ENCODE measurements at regions of chr4 and their contacts with region 1.

Region 1: GRCh38 chr4:122710434-122711308 is 21.8 kb upstream of the BBS12 start:
- DNase-seq: peak; percentile 72
- ATAC-seq: peak; percentile 91
- H3K4me3 Mint-ChIP-seq: peak overlapping the region; percentile 56
- H3K27ac Mint-ChIP-seq: peak overlapping the region; percentile 97
- H3K4me1 Mint-ChIP-seq: peaks cover 79% of the 10 kb centered on the region
- H3K27me3 Mint-ChIP-seq: no peaks in the 10 kb centered on the region

Region 2: GRCh38 chr4:122508083-122508482 is 202.6 kb before region 1 on chr4:
- CTCF ChIA-PET with region 1: no interaction called
- POLR2A ChIA-PET with region 1: interaction called, 3 read pairs
- intact Hi-C with region 1: loop called (anchors 2 to 5 kb)
- DNase-seq: no peak
- ATAC-seq: peak; percentile 77
- H3K4me3 Mint-ChIP-seq: peak overlapping the region; percentile 64
- H3K27ac Mint-ChIP-seq: peak overlapping the region; percentile 92
- H3K4me1 Mint-ChIP-seq: peaks cover 84% of the 10 kb centered on the region
- H3K27me3 Mint-ChIP-seq: peaks cover 2% of the 10 kb centered on the region

Region 3: GRCh38 chr4:122602277-122603142 is 108.2 kb before region 1 on chr4:
- CTCF ChIA-PET with region 1: interaction called, 49 read pairs
- POLR2A ChIA-PET with region 1: no interaction called
- intact Hi-C with region 1: no loop called
- DNase-seq: peak; percentile 40
- ATAC-seq: peak; percentile 89
- H3K4me3 Mint-ChIP-seq: peak overlapping the region; percentile 54
- H3K27ac Mint-ChIP-seq: peak overlapping the region; percentile 59
- H3K4me1 Mint-ChIP-seq: peaks cover 30% of the 10 kb centered on the region
- H3K27me3 Mint-ChIP-seq: peaks cover 3% of the 10 kb centered on the region

Region 4: GRCh38 chr4:122632396-122633143 is 78.1 kb before region 1 on chr4:
- CTCF ChIA-PET with region 1: interaction called, 6 read pairs
- POLR2A ChIA-PET with region 1: interaction called, 3 read pairs
- intact Hi-C with region 1: loop called in 1 of 2 experiments (anchors 1 kb)
- DNase-seq: no peak
- ATAC-seq: peak; percentile 81
- H3K4me3 Mint-ChIP-seq: no peak overlapping the region
- H3K27ac Mint-ChIP-seq: peak overlapping the region; percentile 21
- H3K4me1 Mint-ChIP-seq: peaks cover 45% of the 10 kb centered on the region
- H3K27me3 Mint-ChIP-seq: peaks cover 5% of the 10 kb centered on the region

Region 5: DNA sequence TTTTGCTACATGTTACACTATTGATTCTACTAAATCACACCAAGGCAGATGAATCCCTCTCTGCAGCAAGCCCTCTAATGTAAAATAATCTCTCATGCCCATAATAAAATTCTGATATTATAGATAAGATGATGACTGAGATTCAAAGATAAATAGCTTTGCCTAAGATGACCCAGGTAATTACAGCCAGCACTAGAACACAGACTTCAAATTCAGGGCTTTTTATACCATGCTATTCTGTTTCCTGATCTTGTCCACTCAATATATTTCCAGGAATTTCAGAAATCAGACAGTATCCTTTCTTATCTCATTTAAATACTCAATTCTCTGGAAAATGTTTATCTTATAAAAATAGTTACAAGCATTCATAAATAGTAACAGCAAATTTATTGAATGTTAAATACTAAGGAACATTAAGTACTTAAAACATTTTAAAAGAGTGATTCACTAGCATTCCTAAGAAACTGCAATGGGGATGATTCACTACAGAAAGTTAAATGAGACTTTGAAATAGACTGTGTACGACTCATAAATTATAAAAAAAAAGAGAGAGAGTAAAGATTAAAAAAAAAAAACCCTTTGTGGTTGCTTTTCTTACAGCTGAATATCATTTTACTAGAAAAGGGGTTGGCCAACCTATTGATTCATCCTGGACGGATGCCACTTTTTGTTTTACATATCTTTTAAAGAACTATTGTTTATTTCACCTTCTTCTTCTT is 44.0 kb before region 1 on chr4:
- CTCF ChIA-PET with region 1: interaction called, 11 read pairs
- POLR2A ChIA-PET with region 1: interaction called, 7 read pairs
- intact Hi-C with region 1: loop called (anchors 1 kb)
- DNase-seq: peak; percentile 41
- ATAC-seq: peak; percentile 58
- H3K4me3 Mint-ChIP-seq: peak overlapping the region; percentile 27
- H3K27ac Mint-ChIP-seq: peak overlapping the region; percentile 95
- H3K4me1 Mint-ChIP-seq: peaks cover 82% of the 10 kb centered on the region
- H3K27me3 Mint-ChIP-seq: no peaks in the 10 kb centered on the region

Region 6: DNA sequence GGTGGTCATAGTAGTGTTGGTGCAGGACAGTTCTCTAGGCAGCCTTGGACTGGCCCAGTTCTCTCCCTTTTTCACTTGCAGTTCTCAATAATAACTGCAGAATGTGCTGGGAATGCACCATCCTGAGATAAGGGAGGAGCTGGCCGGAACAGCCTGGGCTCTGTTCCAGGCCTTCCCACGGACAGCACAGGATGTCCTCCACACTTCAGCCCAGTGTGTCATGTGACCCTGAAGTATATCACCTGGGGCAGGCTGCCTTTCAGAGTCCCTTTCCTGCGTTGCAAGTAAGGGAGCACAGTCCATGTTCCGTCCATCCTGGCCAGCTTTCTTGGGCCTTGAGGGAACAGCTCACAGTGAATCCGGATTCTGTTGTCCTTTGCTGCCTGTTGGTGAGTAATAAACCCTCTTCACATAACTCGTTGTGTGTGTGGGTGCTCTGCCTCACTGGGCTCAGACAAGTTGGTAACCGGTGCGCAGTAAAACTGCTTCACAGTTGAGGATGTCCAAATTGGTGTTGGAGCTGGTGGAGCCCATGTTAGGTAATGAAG is 10.4 kb before region 1 on chr4:
- CTCF ChIA-PET with region 1: interaction called, 5 read pairs
- POLR2A ChIA-PET with region 1: interaction called, 4 read pairs
- intact Hi-C with region 1: loop called (anchors 1 kb)
- DNase-seq: no peak
- ATAC-seq: peak; percentile 8
- H3K4me3 Mint-ChIP-seq: peak overlapping the region; percentile 71
- H3K27ac Mint-ChIP-seq: peak overlapping the region; percentile 93
- H3K4me1 Mint-ChIP-seq: peaks cover 59% of the 10 kb centered on the region
- H3K27me3 Mint-ChIP-seq: peaks cover 5% of the 10 kb centered on the region

Region 7: GRCh38 chr4:122963216-122963615 is 252.5 kb after region 1 on chr4:
- CTCF ChIA-PET with region 1: no interaction called
- POLR2A ChIA-PET with region 1: no interaction called
- intact Hi-C with region 1: no loop called
- DNase-seq: no peak
- ATAC-seq: peak; percentile 76
- H3K4me3 Mint-ChIP-seq: no peak overlapping the region
- H3K27ac Mint-ChIP-seq: no peak overlapping the region
- H3K4me1 Mint-ChIP-seq: peaks cover 9% of the 10 kb centered on the region
- H3K27me3 Mint-ChIP-seq: no peaks in the 10 kb centered on the region

Region 8: DNA sequence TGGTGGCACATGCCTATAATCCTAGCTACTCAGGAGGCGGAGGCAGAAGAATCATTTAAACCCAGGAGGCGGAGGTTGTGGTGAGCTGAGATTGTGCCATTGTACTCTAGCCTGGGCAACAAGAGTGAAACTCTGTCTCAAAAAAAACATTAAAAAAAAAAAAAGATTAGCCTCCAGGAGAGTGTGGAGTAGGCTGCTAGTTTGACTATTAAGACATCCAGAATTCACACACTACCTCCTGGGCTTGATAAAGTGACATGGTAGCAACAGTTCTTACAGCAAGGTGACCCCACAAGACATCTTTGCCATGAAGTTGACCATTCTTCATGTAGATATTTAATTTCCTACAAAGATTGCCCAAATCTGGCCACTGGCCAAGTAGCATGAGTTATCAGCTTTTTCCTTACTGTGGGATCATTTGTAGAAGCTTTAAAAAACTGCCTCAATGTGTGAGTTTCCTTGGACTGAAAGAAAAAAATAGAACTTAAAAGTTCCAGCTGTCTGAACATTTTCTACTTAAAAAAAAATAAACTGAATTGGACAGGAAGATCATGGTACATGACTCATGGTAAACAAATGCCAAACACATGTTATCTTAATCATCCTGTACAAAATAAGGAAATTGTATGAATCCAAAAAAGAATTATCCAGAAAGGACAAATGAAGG is 650.7 kb after region 1 on chr4:
- CTCF ChIA-PET with region 1: no interaction called
- POLR2A ChIA-PET with region 1: no interaction called
- intact Hi-C with region 1: no loop called
- DNase-seq: no peak
- ATAC-seq: no peak
- H3K4me3 Mint-ChIP-seq: no peak overlapping the region
- H3K27ac Mint-ChIP-seq: no peak overlapping the region
- H3K4me1 Mint-ChIP-seq: no peaks in the 10 kb centered on the region
- H3K27me3 Mint-ChIP-seq: no peaks in the 10 kb centered on the region